Tibial artery (tissue), 4 donors: ENCODE measurements at regions of chr1 and their contacts with region 1.

Region 1: GRCh38 chr1:1402081-1402900 is 3.2 kb upstream of the CCNL2 start:
- DNase-seq: no peak
- H3K4me3 ChIP-seq: no peak overlapping the region
- H3K27ac ChIP-seq: no peak overlapping the region
- H3K4me1 ChIP-seq: peaks cover 0 to 48% (median 41%) of the 10 kb centered on the region in 4 donors
- H3K27me3 ChIP-seq: no peaks in the 10 kb centered on the region
- CTCF ChIP-seq: no peak

Region 2: DNA sequence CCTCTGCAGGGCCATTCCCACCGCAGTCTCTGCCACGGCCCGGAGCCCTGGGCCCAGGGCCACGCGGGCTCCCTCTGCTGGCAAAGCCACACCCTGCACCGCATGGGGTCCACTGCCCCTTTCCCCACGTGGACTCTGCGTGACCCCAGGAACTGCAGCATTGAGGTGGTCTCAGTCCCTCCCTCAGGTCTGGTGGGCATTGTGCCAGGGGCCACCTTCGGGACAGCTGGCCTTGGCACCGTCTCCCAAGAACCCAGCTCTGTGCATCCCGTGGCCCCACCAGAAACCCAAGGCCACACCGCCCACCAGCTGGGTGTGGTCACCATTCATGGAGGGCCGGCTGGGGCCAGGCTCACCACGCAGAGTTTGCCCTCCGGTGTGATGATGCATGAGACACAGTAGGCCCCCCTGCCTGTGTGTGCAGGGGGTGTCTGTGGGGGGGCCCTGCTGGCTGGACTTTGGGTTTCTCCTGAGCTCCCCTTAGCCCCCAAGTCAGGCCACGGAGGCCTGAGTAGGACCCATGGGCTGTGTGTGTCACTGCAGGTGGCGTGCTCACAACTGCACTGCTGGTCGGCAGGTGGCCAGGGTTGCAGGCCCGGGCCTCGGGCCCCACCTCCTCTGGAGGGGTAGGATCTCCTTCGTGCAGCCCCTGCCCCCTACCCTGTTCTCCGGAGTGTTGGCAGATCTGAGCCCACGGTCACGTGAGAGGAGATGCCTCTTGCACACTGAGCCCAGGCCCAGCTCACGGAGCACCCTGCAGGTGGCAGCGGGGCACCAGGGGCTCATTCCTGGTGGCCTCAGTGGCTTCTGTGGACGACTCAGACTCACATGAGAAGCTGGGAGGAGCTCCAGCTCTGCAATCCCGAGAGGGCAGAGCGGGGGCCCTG is 39.0 kb after region 1 on chr1:
- intact Hi-C with region 1: loop called (anchors 5 kb)
- DNase-seq: peak in 1 of 2 donors; percentile 69
- H3K4me3 ChIP-seq: no peak overlapping the region
- H3K27ac ChIP-seq: no peak overlapping the region
- H3K4me1 ChIP-seq: peaks cover 0 to 41% (median 8%) of the 10 kb centered on the region in 4 donors
- H3K27me3 ChIP-seq: peaks cover 0 to 30% of the 10 kb centered on the region in 2 donors
- CTCF ChIP-seq: peak; percentile 66 to 79